A673 (cell line): ENCODE measurements at regions of chr12 and their contacts with region 1.

Region 1: DNA sequence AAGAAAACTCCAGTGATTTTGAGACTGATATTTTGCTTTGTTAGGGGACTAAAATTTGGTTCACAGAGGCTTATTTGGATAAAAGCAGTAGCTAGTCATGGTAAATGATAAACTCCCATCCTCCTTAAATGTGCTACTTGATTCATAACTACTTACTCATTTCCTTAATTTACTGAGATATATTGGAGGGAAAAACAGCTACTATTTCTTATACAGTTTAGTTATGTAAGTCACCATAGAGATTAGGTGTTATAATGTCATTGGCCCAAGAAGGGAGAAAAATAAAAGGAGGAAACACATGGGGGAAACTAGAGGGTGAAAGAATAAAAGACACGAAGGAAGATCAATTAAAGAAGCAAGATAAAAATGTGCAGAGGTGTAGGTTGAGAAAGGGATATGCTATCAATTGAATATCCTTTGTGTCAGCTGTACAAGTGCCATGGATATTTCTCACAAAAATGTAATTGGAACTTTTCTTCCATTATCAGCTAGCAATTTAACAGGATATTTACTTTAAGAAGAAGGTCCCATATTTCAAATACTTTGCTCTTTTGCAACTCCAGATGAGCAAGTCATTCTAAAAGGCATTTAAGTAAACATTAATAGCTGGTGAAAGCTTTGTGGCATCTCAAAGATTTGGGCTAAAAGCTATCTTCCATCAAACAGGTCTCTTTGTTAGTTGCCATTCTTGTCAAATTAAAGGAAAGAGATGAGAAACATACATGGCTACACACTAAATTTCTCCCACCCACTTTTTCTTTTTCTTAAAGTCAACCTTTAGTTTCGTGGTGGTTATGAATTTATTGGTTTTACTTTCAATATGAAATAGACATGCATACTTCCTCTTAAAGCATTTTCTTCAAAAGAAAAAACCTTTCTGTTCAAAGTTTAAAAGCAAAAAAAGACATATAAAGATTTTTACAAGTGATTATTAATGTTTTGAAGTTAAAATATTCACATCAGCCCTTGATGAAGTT is 439.5 kb downstream of the CCER1 start:
- DNase-seq: no peak
- H3K4me3 ChIP-seq: no peak overlapping the region
- H3K27ac ChIP-seq: no peak overlapping the region
- H3K4me1 ChIP-seq: peaks cover 22% of the 10 kb centered on the region
- H3K27me3 ChIP-seq: no peaks in the 10 kb centered on the region
- CTCF ChIP-seq: no peak

Region 2: GRCh38 chr12:90366286-90366685 is 149.2 kb before region 1 on chr12:
- CTCF ChIA-PET with region 1: no interaction called
- POLR2A ChIA-PET with region 1: no interaction called
- intact Hi-C with region 1: no loop called
- DNase-seq: no peak
- H3K4me3 ChIP-seq: no peak overlapping the region
- H3K27ac ChIP-seq: no peak overlapping the region
- H3K4me1 ChIP-seq: no peaks in the 10 kb centered on the region
- H3K27me3 ChIP-seq: no peaks in the 10 kb centered on the region
- CTCF ChIP-seq: no peak

Region 3: GRCh38 chr12:90407841-90408240 is 107.6 kb before region 1 on chr12:
- CTCF ChIA-PET with region 1: no interaction called
- POLR2A ChIA-PET with region 1: no interaction called
- intact Hi-C with region 1: no loop called
- DNase-seq: peak; percentile 60
- H3K4me3 ChIP-seq: no peak overlapping the region
- H3K27ac ChIP-seq: no peak overlapping the region
- H3K4me1 ChIP-seq: peaks cover 7% of the 10 kb centered on the region
- H3K27me3 ChIP-seq: no peaks in the 10 kb centered on the region
- CTCF ChIP-seq: peak; percentile 40

Region 4: GRCh38 chr12:90504806-90505205 is 10.7 kb before region 1 on chr12:
- CTCF ChIA-PET with region 1: no interaction called
- POLR2A ChIA-PET with region 1: interaction called, 11 read pairs
- intact Hi-C with region 1: no loop called
- DNase-seq: no peak
- H3K4me3 ChIP-seq: no peak overlapping the region
- H3K27ac ChIP-seq: no peak overlapping the region
- H3K4me1 ChIP-seq: no peaks in the 10 kb centered on the region
- H3K27me3 ChIP-seq: no peaks in the 10 kb centered on the region
- CTCF ChIP-seq: no peak